ENCODE measurements at regions of chr7 and their contacts with region 1.

Region 1: DNA sequence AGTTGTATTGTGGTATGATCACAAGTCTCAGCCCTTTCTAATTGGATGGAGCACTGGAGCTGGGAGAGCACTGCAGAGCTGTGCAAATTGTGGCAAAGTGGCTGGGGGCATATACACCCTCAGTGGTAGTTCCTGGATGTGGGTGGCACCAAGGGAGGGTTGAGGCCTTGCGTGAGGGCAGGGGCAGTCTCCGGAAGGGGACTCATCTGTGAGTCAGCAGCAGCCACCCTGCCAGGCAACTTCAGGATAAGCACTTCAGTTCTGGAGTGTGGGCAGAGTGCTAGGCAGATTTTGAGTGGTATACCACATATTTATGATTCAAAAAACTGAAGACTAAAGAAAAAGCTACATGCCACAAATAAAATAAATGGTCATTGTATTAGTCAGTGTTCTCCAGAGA is 210.5 kb downstream of the ETV1 start:
- DNase-seq: peak; percentile 54
- H3K4me3 Mint-ChIP-seq: no peak overlapping the region
- H3K27ac Mint-ChIP-seq: no peak overlapping the region
- H3K4me1 Mint-ChIP-seq: no peaks in the 10 kb centered on the region
- H3K27me3 Mint-ChIP-seq: no peaks in the 10 kb centered on the region

Region 2: GRCh38 chr7:13448226-13448625 is 330.7 kb before region 1 on chr7:
- CTCF ChIA-PET with region 1: no interaction called
- POLR2A ChIA-PET with region 1: no interaction called
- intact Hi-C with region 1: no loop called
- DNase-seq: no peak
- H3K4me3 Mint-ChIP-seq: no peak overlapping the region
- H3K27ac Mint-ChIP-seq: no peak overlapping the region
- H3K4me1 Mint-ChIP-seq: no peaks in the 10 kb centered on the region
- H3K27me3 Mint-ChIP-seq: no peaks in the 10 kb centered on the region

Region 3: DNA sequence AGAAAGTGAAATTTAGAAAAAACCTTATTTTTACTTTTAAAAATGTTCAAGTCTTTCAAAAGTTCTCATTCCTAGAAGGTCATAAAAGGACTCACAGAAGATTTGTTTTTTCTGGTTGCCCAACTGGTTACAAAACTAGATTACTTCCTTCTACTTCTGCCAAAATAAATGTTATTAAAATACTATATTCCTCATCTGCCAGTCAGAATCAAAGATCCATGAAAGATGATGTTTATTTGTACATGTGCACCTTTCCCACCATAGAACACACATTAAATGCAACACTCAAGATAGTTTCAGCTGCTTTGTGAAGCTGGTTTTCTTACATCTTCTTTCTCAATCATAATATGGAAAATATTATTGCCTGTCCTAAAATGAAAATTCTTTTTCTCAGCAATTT is 254.9 kb before region 1 on chr7:
- CTCF ChIA-PET with region 1: no interaction called
- POLR2A ChIA-PET with region 1: no interaction called
- intact Hi-C with region 1: no loop called
- DNase-seq: no peak
- H3K4me3 Mint-ChIP-seq: no peak overlapping the region
- H3K27ac Mint-ChIP-seq: no peak overlapping the region
- H3K4me1 Mint-ChIP-seq: no peaks in the 10 kb centered on the region
- H3K27me3 Mint-ChIP-seq: no peaks in the 10 kb centered on the region

Region 4: DNA sequence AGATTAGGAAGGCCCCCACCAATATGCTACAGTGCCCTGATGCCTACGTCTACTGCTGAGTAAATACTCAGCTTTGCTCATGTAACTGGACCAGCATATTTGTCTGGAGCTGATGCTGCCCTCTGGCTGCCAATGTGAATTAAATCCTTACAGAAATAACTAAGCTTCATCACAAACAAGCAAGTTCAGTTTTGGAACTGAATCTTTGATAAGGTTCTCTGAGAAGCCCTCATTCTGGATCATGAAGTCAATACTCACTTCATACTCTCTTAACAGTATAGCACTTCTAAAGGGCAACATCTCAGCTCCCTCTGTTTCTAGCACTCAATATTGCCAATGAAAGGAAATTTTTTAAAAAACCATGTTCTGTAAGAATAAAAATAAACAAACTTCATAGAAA is 36.2 kb before region 1 on chr7:
- CTCF ChIA-PET with region 1: no interaction called
- POLR2A ChIA-PET with region 1: no interaction called
- intact Hi-C with region 1: no loop called
- DNase-seq: peak; percentile 17
- H3K4me3 Mint-ChIP-seq: no peak overlapping the region
- H3K27ac Mint-ChIP-seq: no peak overlapping the region
- H3K4me1 Mint-ChIP-seq: no peaks in the 10 kb centered on the region
- H3K27me3 Mint-ChIP-seq: no peaks in the 10 kb centered on the region

Region 5: GRCh38 chr7:13800694-13801448 is 21.9 kb after region 1 on chr7:
- CTCF ChIA-PET with region 1: no interaction called
- POLR2A ChIA-PET with region 1: no interaction called
- intact Hi-C with region 1: loop called (anchors 2 kb)
- DNase-seq: peak; percentile 53
- H3K4me3 Mint-ChIP-seq: no peak overlapping the region
- H3K27ac Mint-ChIP-seq: no peak overlapping the region
- H3K4me1 Mint-ChIP-seq: peaks cover 2% of the 10 kb centered on the region
- H3K27me3 Mint-ChIP-seq: no peaks in the 10 kb centered on the region

Region 6: GRCh38 chr7:13910805-13911551 is 132.0 kb after region 1 on chr7:
- CTCF ChIA-PET with region 1: no interaction called
- POLR2A ChIA-PET with region 1: no interaction called
- intact Hi-C with region 1: loop called (anchors 10 kb)
- DNase-seq: no peak
- H3K4me3 Mint-ChIP-seq: no peak overlapping the region
- H3K27ac Mint-ChIP-seq: no peak overlapping the region
- H3K4me1 Mint-ChIP-seq: peaks cover 35% of the 10 kb centered on the region
- H3K27me3 Mint-ChIP-seq: no peaks in the 10 kb centered on the region

Region 7: DNA sequence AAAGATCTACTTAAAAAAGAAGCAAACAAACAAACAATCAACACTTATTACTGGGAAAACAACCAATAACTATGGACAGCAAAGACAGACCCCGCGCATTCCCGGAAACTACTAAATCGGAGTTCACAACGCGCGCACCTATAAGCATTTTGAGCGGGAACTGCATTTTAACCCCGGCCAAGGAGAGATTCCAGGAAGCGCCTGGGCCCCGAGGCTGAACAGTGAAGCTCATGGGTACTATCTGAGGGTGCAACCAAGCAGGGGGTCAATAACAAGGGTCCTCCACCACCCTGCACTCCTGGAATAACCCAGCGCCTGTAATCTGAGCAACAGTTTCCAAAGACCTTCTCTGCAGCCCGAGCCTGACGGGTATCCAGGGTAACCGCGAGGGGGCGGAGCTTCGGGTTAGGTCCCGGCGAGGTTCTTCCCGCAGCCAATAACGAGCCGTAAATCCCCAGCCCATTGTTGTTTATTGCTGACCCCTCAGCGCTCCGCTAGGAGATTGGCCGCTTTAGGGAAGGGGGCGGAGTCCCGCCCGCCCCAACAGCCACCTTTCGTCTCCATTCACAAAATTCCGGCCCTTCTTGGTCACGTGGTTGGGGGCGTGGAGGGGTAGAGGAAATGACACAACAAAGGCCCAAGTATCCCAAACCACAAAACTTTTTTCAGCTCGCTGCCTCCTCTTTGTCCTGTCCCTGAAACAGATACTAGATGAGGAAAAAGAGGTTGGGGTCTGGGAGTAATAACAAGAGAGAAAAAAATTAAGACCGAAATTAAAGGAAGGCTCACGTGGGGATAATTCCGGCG is 212.2 kb after region 1 on chr7:
- CTCF ChIA-PET with region 1: no interaction called
- POLR2A ChIA-PET with region 1: no interaction called
- intact Hi-C with region 1: loop called (anchors 10 kb)
- DNase-seq: peak; percentile 83
- H3K4me3 Mint-ChIP-seq: no peak overlapping the region
- H3K27ac Mint-ChIP-seq: no peak overlapping the region
- H3K4me1 Mint-ChIP-seq: no peaks in the 10 kb centered on the region
- H3K27me3 Mint-ChIP-seq: peaks cover 3% of the 10 kb centered on the region

Region 8: GRCh38 chr7:14579971-14580370 is 801.0 kb after region 1 on chr7:
- CTCF ChIA-PET with region 1: no interaction called
- POLR2A ChIA-PET with region 1: no interaction called
- intact Hi-C with region 1: loop called (anchors 10 kb)
- DNase-seq: no peak
- H3K4me3 Mint-ChIP-seq: no peak overlapping the region
- H3K27ac Mint-ChIP-seq: no peak overlapping the region
- H3K4me1 Mint-ChIP-seq: no peaks in the 10 kb centered on the region
- H3K27me3 Mint-ChIP-seq: no peaks in the 10 kb centered on the region